ENCODE measurements at regions of chr14 and their contacts with region 1.

Region 1: DNA sequence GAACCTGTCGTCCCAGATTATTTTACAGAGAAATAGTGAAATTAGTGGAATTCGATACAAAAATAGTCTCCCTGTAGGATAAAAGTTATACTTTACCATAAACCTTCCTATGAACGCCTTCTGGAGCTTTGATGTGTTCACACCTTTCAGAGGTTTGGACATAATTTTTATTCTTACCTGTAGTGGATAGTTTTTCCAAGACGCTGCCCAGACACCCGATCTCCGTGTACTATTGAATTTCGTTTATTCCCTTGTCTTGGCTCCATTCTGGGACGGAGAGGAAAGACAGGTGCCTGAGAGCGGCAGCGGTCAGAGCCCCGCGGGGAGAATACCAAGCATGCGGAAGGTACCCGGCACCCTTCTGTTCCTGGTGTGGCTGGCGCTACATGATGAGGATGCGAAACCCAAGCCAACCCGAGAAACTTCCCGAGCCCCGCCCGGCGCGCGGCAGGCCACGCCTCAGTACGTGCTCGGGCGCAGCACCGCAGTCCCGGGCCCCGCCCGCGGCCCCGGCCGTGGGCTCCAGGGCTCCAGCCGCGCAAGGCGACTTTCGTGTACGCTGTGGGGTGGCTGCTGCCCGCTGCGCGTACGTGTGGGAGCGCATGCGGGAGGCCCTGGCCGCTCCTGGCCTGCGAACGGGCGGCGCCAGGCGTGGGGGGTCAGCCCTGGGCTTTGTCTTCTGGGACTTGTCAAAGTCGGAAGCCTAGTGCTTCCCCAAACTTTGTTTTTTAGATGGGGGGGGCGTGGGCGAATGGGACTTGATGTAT is 11.3 kb upstream of the SNAPC1 start:
- DNase-seq: peak; percentile 84
- H3K4me3 Mint-ChIP-seq: peak overlapping the region; percentile 90
- H3K27ac Mint-ChIP-seq: peak overlapping the region; percentile 81
- H3K4me1 Mint-ChIP-seq: peaks cover 48% of the 10 kb centered on the region
- H3K27me3 Mint-ChIP-seq: no peaks in the 10 kb centered on the region

Region 2: DNA sequence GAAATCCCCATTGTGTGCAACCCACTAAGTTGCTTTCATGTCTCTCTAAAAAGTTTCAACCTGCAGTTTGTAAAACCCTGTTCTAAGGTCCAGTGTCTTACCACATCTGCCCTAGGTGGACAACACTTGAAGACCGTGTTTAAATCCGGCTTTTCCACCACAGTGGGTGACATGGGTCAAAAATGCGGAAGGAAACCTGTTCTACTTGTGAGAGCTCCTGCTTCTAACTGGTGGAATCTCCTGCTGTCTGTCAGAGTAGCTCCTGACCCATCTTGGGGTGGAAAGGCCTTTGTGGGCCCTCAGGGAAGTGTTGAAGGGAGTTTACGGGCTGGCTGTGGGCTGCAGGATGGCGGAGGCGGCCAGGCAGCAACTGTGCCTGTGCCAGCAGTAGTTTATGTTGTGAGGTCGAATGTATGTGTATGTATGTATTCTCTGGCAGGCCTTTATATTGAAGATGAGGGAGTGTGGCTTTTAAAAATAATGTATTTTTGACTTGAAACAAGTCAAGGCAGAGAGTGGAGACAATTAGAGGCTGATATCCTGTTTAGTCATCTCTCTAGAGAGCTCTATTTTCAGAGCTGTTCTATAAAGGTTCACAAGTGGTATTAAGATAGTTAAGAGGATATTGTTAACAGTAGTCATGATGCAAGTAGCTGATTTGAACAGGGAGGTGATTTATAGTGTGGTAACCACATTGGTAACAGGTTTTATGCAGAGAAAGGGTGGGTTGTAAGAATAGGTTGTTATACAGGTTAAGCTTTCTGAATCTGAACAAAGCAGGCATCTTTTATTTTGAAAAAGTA is 362.5 kb before region 1 on chr14:
- intact Hi-C with region 1: loop called (anchors 5 kb)
- DNase-seq: no peak
- H3K4me3 Mint-ChIP-seq: peak overlapping the region; percentile 26
- H3K27ac Mint-ChIP-seq: no peak overlapping the region
- H3K4me1 Mint-ChIP-seq: peaks cover 34% of the 10 kb centered on the region
- H3K27me3 Mint-ChIP-seq: no peaks in the 10 kb centered on the region

Region 3: DNA sequence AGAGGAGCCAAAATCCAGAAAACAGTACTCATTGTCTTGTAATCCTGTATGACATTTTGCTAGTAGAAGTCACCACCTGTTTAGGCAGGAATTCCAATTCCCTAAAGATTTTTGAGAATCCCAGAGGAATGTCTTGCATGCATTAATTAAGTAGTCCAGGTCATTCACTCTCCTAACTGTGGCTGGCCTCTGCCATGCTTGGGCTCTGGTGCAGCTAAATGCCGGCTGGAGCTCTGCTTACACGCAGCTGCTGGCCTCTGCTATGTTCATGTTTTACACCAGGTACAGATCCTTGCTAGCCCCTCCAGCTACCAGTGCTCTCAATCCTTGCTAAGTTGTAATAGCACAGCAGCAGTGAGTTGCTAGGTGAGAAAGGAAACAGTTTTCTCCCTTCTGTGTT is 71.9 kb before region 1 on chr14:
- intact Hi-C with region 1: no loop called
- DNase-seq: no peak
- H3K4me3 Mint-ChIP-seq: no peak overlapping the region
- H3K27ac Mint-ChIP-seq: no peak overlapping the region
- H3K4me1 Mint-ChIP-seq: peaks cover 11% of the 10 kb centered on the region
- H3K27me3 Mint-ChIP-seq: no peaks in the 10 kb centered on the region

Region 4: DNA sequence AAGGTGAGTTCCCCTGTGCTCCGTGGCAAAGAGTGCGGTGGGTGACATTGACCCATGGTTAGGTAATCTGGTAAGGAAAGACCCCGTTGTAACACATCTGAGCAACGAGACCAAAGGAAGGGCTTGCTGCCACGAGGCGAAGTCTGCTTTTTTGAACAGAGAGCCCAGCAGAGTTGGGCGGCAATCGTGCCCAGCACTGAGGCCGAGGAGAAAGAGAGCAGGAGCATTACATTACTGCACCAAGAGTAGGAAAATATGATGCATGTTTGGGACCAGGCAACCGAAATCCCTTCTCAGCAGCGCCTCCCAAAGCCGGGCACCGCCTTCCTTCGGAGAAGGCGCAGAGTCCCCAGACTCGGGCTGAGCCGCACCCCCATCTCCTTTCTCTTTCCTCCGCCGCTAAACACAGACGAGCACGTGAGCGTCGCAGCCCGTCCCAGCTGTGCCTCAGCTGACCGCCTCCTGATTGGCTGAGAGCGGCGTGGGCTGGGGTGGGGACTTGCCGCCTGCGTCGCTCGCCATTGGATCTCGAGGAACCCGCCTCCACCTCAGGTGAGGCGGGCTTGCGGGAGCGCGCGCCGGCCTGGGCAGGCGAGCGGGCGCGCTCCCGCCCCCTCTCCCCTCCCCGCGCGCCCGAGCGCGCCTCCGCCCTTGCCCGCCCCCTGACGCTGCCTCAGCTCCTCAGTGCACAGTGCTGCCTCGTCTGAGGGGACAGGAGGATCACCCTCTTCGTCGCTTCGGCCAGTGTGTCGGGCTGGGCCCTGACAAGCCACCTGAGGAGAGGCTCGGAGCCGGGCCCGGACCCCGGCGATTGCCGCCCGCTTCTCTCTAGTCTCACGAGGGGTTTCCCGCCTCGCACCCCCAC is 55.8 kb before region 1 on chr14 and contains the start of gene HIF1A:
- intact Hi-C with region 1: loop called (anchors 1 kb)
- DNase-seq: peak; percentile 96
- H3K4me3 Mint-ChIP-seq: peak within 1 kb of the TSS; percentile 89
- H3K27ac Mint-ChIP-seq: peak within 1 kb of the TSS; percentile 95
- H3K4me1 Mint-ChIP-seq: peaks cover 50% of the 10 kb centered on the region
- H3K27me3 Mint-ChIP-seq: no peaks in the 10 kb centered on the region
- total RNA-seq, gene HIF1A: 131 and 138 TPM in 2 replicates

Region 5: DNA sequence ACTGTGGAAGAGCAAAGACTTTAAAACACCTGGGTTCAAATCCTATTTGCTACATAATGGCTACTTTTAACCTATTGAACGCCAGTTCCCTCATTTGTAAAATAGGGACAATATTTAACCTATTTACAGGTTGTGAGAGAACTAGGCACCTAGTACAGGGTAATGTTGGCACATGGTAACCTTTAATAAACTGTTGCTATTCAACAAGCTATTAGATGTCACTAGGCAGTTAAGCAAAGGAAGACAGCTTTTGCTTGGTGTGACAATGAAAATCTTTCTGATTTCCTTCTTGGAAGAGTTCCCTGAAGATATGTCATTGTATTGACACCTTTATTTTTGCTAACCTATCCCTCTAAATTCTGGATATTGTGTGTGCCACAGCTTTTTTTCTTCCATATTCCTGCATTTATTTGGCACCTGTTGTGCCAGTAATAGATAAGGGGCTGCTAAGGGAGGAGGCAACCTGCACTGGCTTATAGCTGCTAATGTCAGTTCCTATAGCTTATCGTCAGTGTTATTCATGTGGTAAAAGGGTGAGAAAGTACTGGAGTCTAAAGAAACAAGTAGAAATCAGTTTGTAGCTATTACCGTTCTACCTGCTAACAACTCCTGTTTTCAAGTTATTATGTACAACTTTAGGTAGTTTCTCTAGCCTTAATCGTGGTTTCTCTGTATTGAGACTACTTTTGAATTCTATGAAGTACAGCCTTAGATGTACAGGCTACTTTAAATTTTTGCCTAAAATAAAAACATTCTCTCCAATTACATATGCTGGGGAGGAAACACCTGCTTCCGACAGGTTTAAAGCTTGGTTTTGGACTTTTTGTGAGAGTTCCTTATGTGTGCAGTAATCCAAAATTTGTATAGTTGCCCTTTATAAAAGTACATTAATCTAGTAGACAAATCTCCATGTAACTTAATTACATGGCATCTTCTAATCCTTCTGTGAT is 31.3 kb before region 1 on chr14:
- intact Hi-C with region 1: loop called (anchors 2 kb)
- DNase-seq: no peak
- H3K4me3 Mint-ChIP-seq: peak overlapping the region; percentile 52
- H3K27ac Mint-ChIP-seq: peak overlapping the region; percentile 81
- H3K4me1 Mint-ChIP-seq: peaks cover 57% of the 10 kb centered on the region
- H3K27me3 Mint-ChIP-seq: no peaks in the 10 kb centered on the region

Region 6: DNA sequence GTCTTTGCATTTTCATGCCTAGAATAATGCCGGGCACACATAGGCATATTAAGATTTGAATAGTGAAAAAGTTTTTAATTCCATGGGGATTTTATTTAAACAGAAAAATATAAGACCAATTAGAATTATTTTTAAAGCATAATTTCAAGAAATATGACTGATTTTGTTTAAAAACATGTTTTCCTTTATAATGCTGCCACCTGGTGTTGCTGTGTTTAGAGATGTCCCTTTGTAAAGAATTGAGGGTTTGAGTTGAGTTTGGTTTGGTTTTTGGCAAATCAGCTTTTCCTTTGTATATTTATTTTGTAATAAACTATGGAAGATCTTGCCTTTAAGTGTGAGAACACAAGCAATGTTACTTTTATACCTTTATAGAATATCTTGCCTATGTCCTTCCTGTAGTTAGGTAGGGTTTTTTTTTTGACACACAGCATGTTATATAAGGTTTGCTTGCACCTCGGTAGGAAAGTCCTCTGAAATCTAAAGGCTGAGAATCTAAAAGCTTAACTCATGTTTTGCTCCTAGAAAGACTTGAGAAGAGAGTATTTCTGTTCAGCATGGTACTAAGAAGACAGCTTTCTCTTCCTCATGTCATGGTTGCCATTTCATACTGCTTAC is 20.0 kb before region 1 on chr14:
- intact Hi-C with region 1: loop called (anchors 2 kb)
- DNase-seq: no peak
- H3K4me3 Mint-ChIP-seq: no peak overlapping the region
- H3K27ac Mint-ChIP-seq: peak overlapping the region; percentile 24
- H3K4me1 Mint-ChIP-seq: peaks cover 58% of the 10 kb centered on the region
- H3K27me3 Mint-ChIP-seq: no peaks in the 10 kb centered on the region

Region 7: DNA sequence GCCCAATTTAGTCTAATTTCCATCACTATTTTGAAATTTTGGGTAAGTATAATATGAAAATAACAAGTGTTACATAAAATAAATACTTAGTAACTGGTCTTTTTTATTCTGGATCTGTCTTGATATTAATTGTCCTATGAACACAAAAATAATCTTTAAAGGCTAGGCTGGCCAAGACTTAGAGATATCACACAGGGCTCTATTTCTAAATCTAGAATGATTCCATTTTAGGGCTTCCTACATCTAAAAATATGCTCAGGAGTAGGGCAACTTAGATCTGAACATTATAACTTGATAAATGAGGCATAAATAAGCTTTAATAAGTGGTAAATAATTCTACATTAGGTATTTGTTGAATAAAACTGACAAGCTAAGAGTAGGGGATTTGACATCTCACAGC is 11.8 kb before region 1 on chr14:
- intact Hi-C with region 1: loop called (anchors 1 kb)
- DNase-seq: no peak
- H3K4me3 Mint-ChIP-seq: no peak overlapping the region
- H3K27ac Mint-ChIP-seq: no peak overlapping the region
- H3K4me1 Mint-ChIP-seq: peaks cover 24% of the 10 kb centered on the region
- H3K27me3 Mint-ChIP-seq: no peaks in the 10 kb centered on the region

Region 8: GRCh38 chr14:61761959-61762786 is 11.3 kb after region 1 on chr14 and contains the start of gene SNAPC1:
- intact Hi-C with region 1: loop called (anchors 1 kb)
- DNase-seq: peak; percentile 98
- H3K4me3 Mint-ChIP-seq: peak within 1 kb of the TSS; percentile 94
- H3K27ac Mint-ChIP-seq: peak within 1 kb of the TSS; percentile 93
- H3K4me1 Mint-ChIP-seq: peaks cover 36% of the 10 kb centered on the region
- H3K27me3 Mint-ChIP-seq: peaks cover 3% of the 10 kb centered on the region
- total RNA-seq, gene SNAPC1: 10.2 and 10.5 TPM in 2 replicates